Activated CD8-positive, alpha-beta T cell treated with anti-CD3 and anti-CD28 coated beads for 36 hours (primary cell): ENCODE measurements at regions of chr11 and their contacts with region 1.

Region 1: GRCh38 chr11:236774-237767 is at the start of gene PSMD13:
- DNase-seq: peak; percentile 94
- ATAC-seq: peak; percentile 87
- H3K4me3 Mint-ChIP-seq: peak within 1 kb of the TSS; percentile 95
- H3K27ac Mint-ChIP-seq: peak within 1 kb of the TSS; percentile 99
- H3K4me1 Mint-ChIP-seq: peaks cover 43% of the 10 kb centered on the region
- H3K27me3 Mint-ChIP-seq: no peaks in the 10 kb centered on the region
- CTCF ChIP-seq: no peak
- total RNA-seq, gene PSMD13: 220 to 228 TPM

Region 2: DNA sequence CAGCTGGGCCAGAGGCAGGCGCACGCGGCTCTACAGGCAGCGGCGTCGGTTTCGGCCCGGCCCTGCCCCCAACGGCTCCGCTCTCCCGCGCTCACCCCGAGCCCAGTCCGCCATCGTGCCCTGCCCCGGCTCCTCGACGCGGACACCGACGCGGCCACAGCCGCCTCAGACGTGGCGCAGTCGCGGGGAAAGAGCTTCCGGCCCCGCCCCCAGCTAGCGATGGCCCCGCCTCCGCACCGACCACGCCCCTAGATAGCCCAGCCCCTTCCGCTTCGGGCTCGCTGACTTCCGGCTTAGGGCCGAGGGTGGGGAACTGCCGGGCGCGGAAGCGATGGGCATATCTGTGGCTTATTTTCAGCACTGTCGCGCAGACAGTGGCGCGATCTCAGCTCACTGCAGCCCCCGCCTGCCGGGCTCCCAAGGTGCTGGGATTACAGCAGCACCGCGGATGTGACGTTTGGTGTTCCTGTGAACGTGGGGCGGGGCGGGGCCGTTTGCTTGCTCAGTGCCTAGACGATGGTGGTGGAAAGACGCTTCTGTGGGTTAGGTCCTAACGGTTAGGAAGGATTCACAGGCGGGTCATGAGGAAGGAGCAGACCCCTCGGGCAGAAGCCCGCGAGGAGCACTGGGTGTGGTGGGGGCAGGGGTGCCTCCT is 29.7 kb before region 1 on chr11 and contains the starts of genes BET1L and RIC8A:
- CTCF ChIA-PET with region 1: interaction called, 8 read pairs
- POLR2A ChIA-PET with region 1: interaction called, 43 read pairs
- intact Hi-C with region 1: loop called (anchors 1 kb)
- DNase-seq: peak; percentile 99
- ATAC-seq: peak; percentile 85
- H3K4me3 Mint-ChIP-seq: peak within 1 kb of the TSS; percentile 96
- H3K27ac Mint-ChIP-seq: peak within 1 kb of the TSS; percentile 99
- H3K4me1 Mint-ChIP-seq: peaks cover 55% of the 10 kb centered on the region
- H3K27me3 Mint-ChIP-seq: no peaks in the 10 kb centered on the region
- CTCF ChIP-seq: no peak
- total RNA-seq, gene BET1L: 58.4 to 68.9 TPM
- total RNA-seq, gene RIC8A: 96.5 to 108 TPM

Region 3: GRCh38 chr11:215581-216037 is 21.5 kb before region 1 on chr11:
- CTCF ChIA-PET with region 1: no interaction called
- POLR2A ChIA-PET with region 1: interaction called, 13 read pairs
- intact Hi-C with region 1: no loop called
- DNase-seq: no peak
- ATAC-seq: no peak
- H3K4me3 Mint-ChIP-seq: no peak overlapping the region
- H3K27ac Mint-ChIP-seq: peak overlapping the region; percentile 55
- H3K4me1 Mint-ChIP-seq: peaks cover 18% of the 10 kb centered on the region
- H3K27me3 Mint-ChIP-seq: no peaks in the 10 kb centered on the region
- CTCF ChIP-seq: no peak

Region 4: DNA sequence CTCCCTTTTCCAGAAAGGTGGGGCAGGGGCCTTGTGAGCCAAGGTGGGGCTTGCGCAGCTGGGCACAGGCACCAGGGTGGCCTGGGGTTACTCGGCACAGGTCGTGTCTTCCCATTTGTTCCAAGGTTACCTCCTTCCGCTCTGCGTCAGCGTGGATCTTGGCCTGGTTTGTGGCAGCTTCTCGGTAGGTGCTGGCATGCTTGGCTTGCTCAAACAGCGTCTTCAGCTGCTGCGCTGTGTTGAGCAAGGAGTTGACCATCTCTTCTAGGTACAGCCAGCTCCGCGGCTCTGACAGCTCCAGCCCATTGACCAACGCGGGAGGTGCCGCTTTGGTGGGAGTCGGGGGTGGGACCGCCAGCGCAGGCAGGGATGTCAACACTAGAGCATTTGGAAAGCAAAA is 437.3 kb after region 1 on chr11:
- CTCF ChIA-PET with region 1: no interaction called
- POLR2A ChIA-PET with region 1: no interaction called
- intact Hi-C with region 1: no loop called
- DNase-seq: no peak
- ATAC-seq: no peak
- H3K4me3 Mint-ChIP-seq: no peak overlapping the region
- H3K27ac Mint-ChIP-seq: no peak overlapping the region
- H3K4me1 Mint-ChIP-seq: no peaks in the 10 kb centered on the region
- H3K27me3 Mint-ChIP-seq: no peaks in the 10 kb centered on the region
- CTCF ChIP-seq: no peak